ENCODE measurements at regions of chr15 and their contacts with region 1.

Region 1: DNA sequence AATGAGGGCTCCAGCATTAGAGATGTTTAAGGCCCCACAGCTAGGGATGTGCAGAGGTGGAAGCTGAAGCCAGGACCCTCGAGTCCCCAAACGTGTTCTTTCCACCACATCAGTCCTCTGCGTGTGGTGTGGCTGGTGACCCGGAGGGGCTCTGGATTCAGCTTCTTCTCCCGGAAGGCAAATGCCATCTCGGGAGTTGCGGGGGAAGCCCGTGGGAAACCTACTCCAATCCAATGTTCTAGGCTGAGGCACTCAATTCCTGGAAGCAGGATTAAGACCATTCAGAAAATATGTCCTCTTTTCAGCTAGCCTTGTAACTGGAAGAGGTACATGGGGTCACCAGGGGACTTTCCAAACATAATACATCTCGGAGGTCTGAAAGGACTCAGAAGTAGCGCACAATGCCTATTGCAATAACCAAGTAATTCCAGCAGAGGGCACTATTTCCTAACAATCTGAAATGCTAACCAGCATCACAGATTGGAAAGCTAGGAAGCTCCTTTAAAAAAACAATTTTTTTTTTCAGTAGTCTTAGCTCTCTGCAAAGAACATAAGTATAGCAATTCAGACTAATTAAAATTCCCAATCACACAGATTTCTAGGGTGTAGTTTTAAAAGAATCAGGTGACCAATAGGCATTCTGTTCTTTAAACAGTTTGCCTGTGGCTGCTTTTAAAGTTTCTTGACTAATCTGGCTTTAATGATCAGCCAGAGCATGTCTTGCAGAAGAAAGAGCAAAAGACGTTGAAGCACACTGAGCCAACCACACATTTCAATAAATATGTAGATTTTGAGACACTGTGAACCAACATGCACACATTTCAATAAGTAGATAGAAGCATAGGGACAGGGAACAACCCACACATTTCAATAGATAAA is 36.1 kb downstream of the BNC1 start:
- DNase-seq: peak; percentile 33
- H3K4me3 ChIP-seq: no peak overlapping the region; a peak in 1 of 4 replicates
- H3K27ac ChIP-seq: no peak overlapping the region
- H3K4me1 ChIP-seq: peaks cover 0 to 2% of the 10 kb centered on the region in 2 experiments; a peak in 1 of 4 replicates
- H3K27me3 ChIP-seq: peaks cover 23% of the 10 kb centered on the region
- CTCF ChIP-seq: peak; percentile 90
- EP300 ChIP-seq: no peak
- RAD21 ChIP-seq: peak; percentile 89

Region 2: GRCh38 chr15:82966671-82967071 is 281.7 kb before region 1 on chr15:
- CTCF ChIA-PET with region 1: no interaction called
- POLR2A ChIA-PET with region 1: no interaction called
- DNase-seq: no peak
- H3K4me3 ChIP-seq: no peak overlapping the region
- H3K27ac ChIP-seq: no peak overlapping the region
- H3K4me1 ChIP-seq: peaks cover 0 to 13% of the 10 kb centered on the region in 2 experiments; a peak in 2 of 4 replicates
- H3K27me3 ChIP-seq: no peaks in the 10 kb centered on the region
- CTCF ChIP-seq: no peak
- EP300 ChIP-seq: no peak
- RAD21 ChIP-seq: no peak

Region 3: DNA sequence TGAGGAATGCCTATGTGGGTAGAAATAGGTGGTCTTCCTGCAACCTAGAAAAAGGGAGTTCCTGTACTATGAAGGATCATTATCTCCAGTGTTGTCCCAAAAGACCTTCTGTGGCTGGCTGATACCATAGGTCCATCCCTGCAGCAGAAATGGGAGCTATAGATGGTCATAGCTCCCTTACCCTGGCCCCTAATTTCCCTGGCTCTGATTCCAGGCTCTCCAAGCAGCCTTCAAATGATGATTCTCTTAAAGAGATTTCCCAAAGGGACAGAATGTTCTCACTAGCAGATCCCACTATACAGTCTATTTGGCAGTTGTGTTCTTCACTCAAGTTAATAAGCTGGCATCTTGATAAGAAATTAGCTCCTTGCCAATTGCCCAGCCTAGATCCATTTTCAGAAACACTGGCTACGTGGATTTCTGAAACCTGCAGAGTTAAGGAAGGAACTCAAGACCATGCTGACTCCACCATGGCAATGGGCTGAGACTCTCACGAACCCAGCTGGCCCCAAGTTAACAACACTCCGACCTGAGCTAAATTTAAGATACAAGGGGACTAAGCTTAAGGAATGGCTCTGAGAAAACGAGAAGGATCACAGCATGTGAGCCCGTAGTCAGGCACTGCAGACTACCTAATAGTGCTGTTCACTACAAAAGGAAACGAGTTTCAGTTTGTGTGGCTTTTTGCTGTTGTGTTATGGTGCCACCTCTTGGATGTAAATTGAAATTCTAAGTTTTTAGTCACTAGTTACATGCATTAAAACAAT is 248.3 kb before region 1 on chr15:
- CTCF ChIA-PET with region 1: no interaction called
- POLR2A ChIA-PET with region 1: no interaction called
- DNase-seq: peak; percentile 68
- H3K4me3 ChIP-seq: peak overlapping the region; percentile 27 to 33
- H3K27ac ChIP-seq: no peak overlapping the region
- H3K4me1 ChIP-seq: peaks cover 0 to 7% of the 10 kb centered on the region in 2 experiments; a peak in 1 of 4 replicates
- H3K27me3 ChIP-seq: no peaks in the 10 kb centered on the region
- CTCF ChIP-seq: peak; percentile 70
- EP300 ChIP-seq: no peak
- RAD21 ChIP-seq: peak; percentile 91

Region 4: GRCh38 chr15:83170474-83171165 is 77.8 kb before region 1 on chr15:
- CTCF ChIA-PET with region 1: no interaction called
- POLR2A ChIA-PET with region 1: no interaction called
- DNase-seq: no peak
- H3K4me3 ChIP-seq: no peak overlapping the region
- H3K27ac ChIP-seq: peak overlapping the region in 1 of 2 experiments; percentile 6; a peak in 1 of 4 replicates
- H3K4me1 ChIP-seq: no peaks in the 10 kb centered on the region; a peak in 2 of 4 replicates
- H3K27me3 ChIP-seq: no peaks in the 10 kb centered on the region
- CTCF ChIP-seq: no peak
- EP300 ChIP-seq: no peak
- RAD21 ChIP-seq: no peak

Region 5: GRCh38 chr15:83207622-83208411 is 40.6 kb before region 1 on chr15 and contains the start of gene HDGFL3:
- CTCF ChIA-PET with region 1: interaction called, 13 read pairs
- POLR2A ChIA-PET with region 1: no interaction called
- DNase-seq: peak; percentile 87
- H3K4me3 ChIP-seq: peak within 1 kb of the TSS; percentile 71 to 86
- H3K27ac ChIP-seq: peak within 1 kb of the TSS; percentile 77 to 93
- H3K4me1 ChIP-seq: peaks cover 0 to 30% of the 10 kb centered on the region in 2 experiments; a peak in 2 of 4 replicates
- H3K27me3 ChIP-seq: no peaks in the 10 kb centered on the region
- CTCF ChIP-seq: peak; percentile 36
- EP300 ChIP-seq: no peak
- RAD21 ChIP-seq: peak; percentile 56
- polyA plus RNA-seq, gene HDGFL3: 8.0 and 9.2 TPM in 2 replicates

Region 6: DNA sequence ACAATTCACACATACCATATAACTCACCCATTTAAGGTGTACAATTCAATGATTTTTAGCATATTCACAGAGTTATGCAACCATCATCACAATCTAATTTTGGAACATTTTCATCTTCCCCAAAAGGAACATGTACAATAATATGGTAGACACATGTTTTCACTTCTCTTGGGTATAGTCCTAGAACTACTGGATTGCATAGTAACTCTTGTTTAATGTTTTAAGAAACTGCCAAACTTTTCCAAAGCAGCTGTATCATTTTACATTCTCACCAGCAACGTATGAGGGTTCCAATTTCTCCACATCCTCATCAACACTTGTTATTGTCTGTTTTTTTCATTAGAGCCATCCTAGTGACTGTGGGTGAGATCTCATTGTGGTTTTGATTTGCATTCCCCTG is 21.8 kb after region 1 on chr15:
- CTCF ChIA-PET with region 1: interaction called, 17 read pairs
- POLR2A ChIA-PET with region 1: no interaction called
- DNase-seq: no peak
- H3K4me3 ChIP-seq: no peak overlapping the region
- H3K27ac ChIP-seq: no peak overlapping the region
- H3K4me1 ChIP-seq: no peaks in the 10 kb centered on the region
- H3K27me3 ChIP-seq: peaks cover 11% of the 10 kb centered on the region
- CTCF ChIP-seq: no peak
- EP300 ChIP-seq: no peak
- RAD21 ChIP-seq: no peak

Region 7: DNA sequence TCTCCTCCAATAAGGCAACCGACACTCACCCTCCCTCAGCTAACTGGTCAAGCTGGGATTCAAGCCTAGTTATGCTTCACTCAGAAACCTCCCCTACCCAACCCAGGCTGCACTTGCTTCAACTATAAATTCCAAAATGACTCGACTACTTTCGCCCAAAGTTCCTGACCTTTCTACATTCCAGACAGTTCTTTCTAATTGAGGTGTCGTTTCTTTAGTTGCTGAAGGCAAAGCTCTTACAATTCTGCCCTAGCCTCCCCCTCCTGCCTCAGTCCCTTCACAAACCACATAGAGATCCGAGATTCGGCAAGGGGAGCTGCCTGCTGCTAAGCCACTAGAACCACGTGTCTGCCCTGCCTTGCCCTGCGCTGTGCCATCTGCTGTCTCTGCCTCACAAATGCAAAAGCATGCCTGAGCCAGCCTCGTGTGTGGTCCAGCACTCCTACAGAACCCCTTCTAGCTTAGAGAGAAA is 124.1 kb after region 1 on chr15:
- CTCF ChIA-PET with region 1: interaction called, 11 read pairs
- POLR2A ChIA-PET with region 1: no interaction called
- DNase-seq: no peak
- H3K4me3 ChIP-seq: no peak overlapping the region
- H3K27ac ChIP-seq: no peak overlapping the region
- H3K4me1 ChIP-seq: no peaks in the 10 kb centered on the region
- H3K27me3 ChIP-seq: peaks cover 24% of the 10 kb centered on the region; the same call in 1 of the 2 replicates
- CTCF ChIP-seq: no peak
- EP300 ChIP-seq: no peak
- RAD21 ChIP-seq: no peak

Region 8: DNA sequence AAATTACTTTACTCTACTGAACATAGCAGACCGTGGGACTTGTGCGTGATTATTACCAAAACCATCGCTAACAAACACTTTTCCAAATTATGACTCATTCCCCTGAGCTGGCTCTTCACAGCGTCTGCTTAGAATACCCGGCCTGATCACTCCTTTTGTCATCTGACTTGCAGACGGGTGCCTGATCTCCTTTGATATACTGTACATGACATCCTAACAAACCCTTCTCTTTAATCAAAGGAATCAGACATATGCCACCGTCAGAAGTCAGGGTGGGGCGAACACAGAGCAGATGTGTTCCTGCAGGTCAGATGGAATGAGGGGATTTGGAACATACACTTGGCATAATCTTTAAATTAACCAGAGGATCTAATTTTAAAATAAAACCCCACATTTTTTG is 150.2 kb after region 1 on chr15:
- CTCF ChIA-PET with region 1: interaction called, 10 read pairs
- POLR2A ChIA-PET with region 1: no interaction called
- DNase-seq: no peak
- H3K4me3 ChIP-seq: no peak overlapping the region
- H3K27ac ChIP-seq: no peak overlapping the region
- H3K4me1 ChIP-seq: no peaks in the 10 kb centered on the region
- H3K27me3 ChIP-seq: peaks cover 26% of the 10 kb centered on the region; the same call in 1 of the 2 replicates
- CTCF ChIP-seq: no peak
- EP300 ChIP-seq: no peak
- RAD21 ChIP-seq: no peak

Region 9: GRCh38 chr15:83446904-83447709 is 198.7 kb after region 1 on chr15 and contains the start of gene SH3GL3:
- CTCF ChIA-PET with region 1: interaction called, 16 read pairs
- POLR2A ChIA-PET with region 1: no interaction called
- DNase-seq: peak; percentile 82
- H3K4me3 ChIP-seq: peak within 1 kb of the TSS; percentile 40 to 66
- H3K27ac ChIP-seq: no peak within 1 kb of the TSS
- H3K4me1 ChIP-seq: peaks cover 0 to 2% of the 10 kb centered on the region in 2 experiments; a peak in 1 of 4 replicates
- H3K27me3 ChIP-seq: peaks cover 15% of the 10 kb centered on the region
- CTCF ChIP-seq: peak; percentile 48
- EP300 ChIP-seq: no peak
- RAD21 ChIP-seq: no peak
- polyA plus RNA-seq, gene SH3GL3: not detected in 2 replicates

Region 10: DNA sequence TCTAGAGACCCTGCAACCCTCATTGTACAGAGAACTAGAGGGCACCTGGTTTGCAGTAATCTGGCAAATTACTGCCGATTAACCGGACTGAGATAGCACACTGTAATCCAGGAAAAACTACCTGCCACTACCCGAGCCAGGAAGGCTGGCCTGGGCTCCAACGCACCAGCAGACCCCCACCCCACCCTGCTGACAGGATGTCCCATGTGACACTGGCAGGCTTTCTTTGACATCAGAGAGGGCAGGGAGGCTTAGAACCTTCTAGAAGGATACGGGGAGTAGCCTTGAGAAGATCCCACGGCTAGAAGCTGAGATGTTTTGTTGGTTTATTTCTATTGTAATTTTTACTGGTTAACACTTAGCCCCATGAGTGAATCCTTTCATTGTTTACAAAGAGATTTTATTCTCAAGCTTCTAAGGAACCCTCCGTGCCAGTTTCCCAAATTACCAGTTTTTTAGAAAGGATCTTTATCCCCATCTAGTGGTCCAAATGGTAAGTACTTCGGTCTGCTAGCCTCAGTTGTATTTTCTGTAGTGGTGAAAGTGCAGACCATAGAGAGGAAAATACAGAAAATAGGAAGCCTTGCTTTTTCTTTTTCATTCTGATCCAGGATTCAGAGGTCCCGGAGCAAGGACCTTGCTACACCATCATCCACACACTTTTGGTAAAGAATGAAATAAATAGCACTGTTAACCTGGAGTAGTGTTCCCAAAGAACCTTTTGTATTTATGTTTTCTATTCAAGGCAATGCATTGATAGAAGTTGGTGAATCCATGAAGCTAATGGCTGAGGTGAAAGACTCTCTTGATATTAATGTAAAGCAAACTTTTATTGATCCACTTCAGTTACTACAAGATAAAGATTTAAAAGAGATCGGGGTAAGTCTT is 323.7 kb after region 1 on chr15:
- CTCF ChIA-PET with region 1: interaction called, 10 read pairs
- POLR2A ChIA-PET with region 1: no interaction called
- DNase-seq: peak; percentile 32
- H3K4me3 ChIP-seq: no peak overlapping the region
- H3K27ac ChIP-seq: no peak overlapping the region
- H3K4me1 ChIP-seq: no peaks in the 10 kb centered on the region
- H3K27me3 ChIP-seq: no peaks in the 10 kb centered on the region; the same call in 1 of the 2 replicates
- CTCF ChIP-seq: peak; percentile 69
- EP300 ChIP-seq: no peak
- RAD21 ChIP-seq: peak; percentile 53

Measured in SK-N-SH (cell line).